ENCODE measurements at regions of chr3 and their contacts with region 1.

Region 1: GRCh38 chr3:38521391-38521987 is 25.3 kb downstream of the EXOG start:
- DNase-seq: peak; percentile 46 to 85
- ATAC-seq: peak; percentile 74 to 77 (median 75)
- H3K4me3 ChIP-seq: no peak overlapping the region
- H3K4me3 Mint-ChIP-seq: no peak overlapping the region
- H3K27ac ChIP-seq: no peak overlapping the region
- H3K27ac Mint-ChIP-seq: peak overlapping the region in 1 of 2 donors; percentile 42
- H3K4me1 ChIP-seq: no peaks in the 10 kb centered on the region
- H3K4me1 Mint-ChIP-seq: peaks cover 18 to 31% of the 10 kb centered on the region in 2 donors
- H3K27me3 ChIP-seq: no peaks in the 10 kb centered on the region
- H3K27me3 Mint-ChIP-seq: no peaks in the 10 kb centered on the region
- CTCF ChIP-seq: peak; percentile 90

Region 2: GRCh38 chr3:38404286-38404685 is 117.2 kb before region 1 on chr3:
- intact Hi-C with region 1: no loop called
- DNase-seq: no peak
- ATAC-seq: no peak
- H3K4me3 ChIP-seq: no peak overlapping the region
- H3K4me3 Mint-ChIP-seq: no peak overlapping the region
- H3K27ac ChIP-seq: no peak overlapping the region
- H3K27ac Mint-ChIP-seq: no peak overlapping the region
- H3K4me1 ChIP-seq: no peaks in the 10 kb centered on the region
- H3K4me1 Mint-ChIP-seq: no peaks in the 10 kb centered on the region
- H3K27me3 ChIP-seq: no peaks in the 10 kb centered on the region
- H3K27me3 Mint-ChIP-seq: no peaks in the 10 kb centered on the region
- CTCF ChIP-seq: no peak

Region 3: GRCh38 chr3:38479431-38480092 is 41.9 kb before region 1 on chr3:
- intact Hi-C with region 1: no loop called
- DNase-seq: peak in 1 of 2 donors; percentile 78
- ATAC-seq: peak; percentile 52 to 87 (median 79)
- H3K4me3 ChIP-seq: no peak overlapping the region
- H3K4me3 Mint-ChIP-seq: no peak overlapping the region
- H3K27ac ChIP-seq: no peak overlapping the region
- H3K27ac Mint-ChIP-seq: no peak overlapping the region
- H3K4me1 ChIP-seq: no peaks in the 10 kb centered on the region
- H3K4me1 Mint-ChIP-seq: peaks cover under 1 to 1% of the 10 kb centered on the region in 2 donors
- H3K27me3 ChIP-seq: no peaks in the 10 kb centered on the region
- H3K27me3 Mint-ChIP-seq: no peaks in the 10 kb centered on the region
- CTCF ChIP-seq: peak; percentile 76

Region 4: GRCh38 chr3:38651154-38651789 is 129.8 kb after region 1 on chr3:
- intact Hi-C with region 1: loop called (anchors 1 kb)
- DNase-seq: peak; percentile 40 to 88
- ATAC-seq: peak; percentile 70 to 80 (median 77)
- H3K4me3 ChIP-seq: no peak overlapping the region
- H3K4me3 Mint-ChIP-seq: no peak overlapping the region
- H3K27ac ChIP-seq: no peak overlapping the region
- H3K27ac Mint-ChIP-seq: no peak overlapping the region
- H3K4me1 ChIP-seq: peaks cover 20% of the 10 kb centered on the region
- H3K4me1 Mint-ChIP-seq: peaks cover 0 to 9% of the 10 kb centered on the region in 2 donors
- H3K27me3 ChIP-seq: peaks cover 10% of the 10 kb centered on the region
- H3K27me3 Mint-ChIP-seq: peaks cover 17 to 24% of the 10 kb centered on the region in 2 donors
- CTCF ChIP-seq: peak; percentile 77

Region 5: DNA sequence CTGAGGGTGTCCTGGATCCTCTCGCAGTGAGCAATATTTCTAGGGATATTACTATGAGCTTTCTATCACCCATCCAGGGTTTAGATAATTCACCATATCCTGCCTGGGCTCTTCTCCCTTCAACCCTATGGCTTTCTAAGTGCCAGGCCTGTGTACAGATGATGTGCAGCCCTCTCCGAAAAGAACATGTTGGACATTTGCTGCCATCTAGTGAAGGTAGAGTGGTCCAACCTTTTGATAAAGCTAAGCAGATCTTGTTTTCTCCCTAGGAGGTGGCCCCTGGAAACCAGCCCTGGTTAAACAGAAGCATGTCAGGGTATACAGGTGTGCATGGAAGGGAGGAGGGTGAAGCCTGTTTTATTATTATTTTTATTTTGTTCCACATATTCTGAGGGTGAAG is 322.4 kb after region 1 on chr3:
- intact Hi-C with region 1: loop called (anchors 10 kb)
- DNase-seq: peak in 1 of 2 donors; percentile 13
- ATAC-seq: no peak
- H3K4me3 ChIP-seq: no peak overlapping the region
- H3K4me3 Mint-ChIP-seq: no peak overlapping the region
- H3K27ac ChIP-seq: no peak overlapping the region
- H3K27ac Mint-ChIP-seq: no peak overlapping the region
- H3K4me1 ChIP-seq: no peaks in the 10 kb centered on the region
- H3K4me1 Mint-ChIP-seq: no peaks in the 10 kb centered on the region
- H3K27me3 ChIP-seq: no peaks in the 10 kb centered on the region
- H3K27me3 Mint-ChIP-seq: peaks cover 17 to 41% of the 10 kb centered on the region in 2 donors
- CTCF ChIP-seq: no peak

Region 6: DNA sequence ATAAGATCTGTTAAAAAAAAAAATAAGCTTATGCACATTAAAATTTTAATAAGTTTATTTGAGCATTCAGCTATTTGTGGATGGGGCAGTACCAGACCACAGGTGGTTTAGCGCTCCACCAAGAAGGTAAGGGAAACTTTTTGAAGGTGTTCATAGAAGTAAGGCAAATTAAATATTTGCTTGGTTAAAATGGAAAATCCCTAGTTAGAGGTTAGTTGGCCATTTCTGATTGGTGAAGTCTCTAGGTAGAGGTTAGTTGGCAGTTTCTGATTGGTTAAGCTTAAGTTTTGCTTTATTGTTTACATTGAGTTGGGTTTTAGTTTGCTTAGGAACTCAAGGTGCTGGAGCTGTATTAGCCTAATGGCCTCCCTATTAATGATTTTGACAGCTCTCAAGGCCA is 499.5 kb after region 1 on chr3:
- intact Hi-C with region 1: loop called (anchors 10 kb)
- DNase-seq: peak in 1 of 2 donors; percentile 6
- ATAC-seq: peak in 2 of 3 donors; percentile 15 to 28
- H3K4me3 ChIP-seq: no peak overlapping the region
- H3K4me3 Mint-ChIP-seq: no peak overlapping the region
- H3K27ac ChIP-seq: no peak overlapping the region
- H3K27ac Mint-ChIP-seq: no peak overlapping the region
- H3K4me1 ChIP-seq: no peaks in the 10 kb centered on the region
- H3K4me1 Mint-ChIP-seq: peaks cover 0 to 4% of the 10 kb centered on the region in 2 donors
- H3K27me3 ChIP-seq: no peaks in the 10 kb centered on the region
- H3K27me3 Mint-ChIP-seq: peaks cover 30 to 66% of the 10 kb centered on the region in 2 donors
- CTCF ChIP-seq: no peak